Endothelial cell of umbilical vein (primary cell): ENCODE measurements at regions of chr12 and their contacts with region 1.

Region 1: DNA sequence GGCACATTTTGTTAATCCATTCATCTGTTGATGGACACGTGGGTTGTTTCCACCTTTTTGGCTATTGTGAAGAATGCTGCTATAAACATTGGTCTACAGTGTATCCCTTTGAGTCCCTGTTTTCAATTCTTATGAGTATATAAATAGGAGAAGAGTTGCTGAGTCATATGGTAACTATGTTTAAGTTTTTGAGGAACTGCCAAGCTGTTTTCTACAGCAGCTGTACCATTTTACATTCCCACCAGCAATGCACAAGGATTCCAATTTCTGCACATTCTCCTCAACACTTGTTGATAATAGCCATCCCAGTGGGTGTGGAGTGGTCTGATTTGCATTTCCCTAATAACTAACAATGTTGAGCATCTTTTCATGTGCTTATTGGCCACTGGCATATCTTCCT is 6.9 kb upstream of the SVOP start:
- DNase-seq: no peak
- H3K4me3 ChIP-seq: no peak overlapping the region
- H3K27ac ChIP-seq: no peak overlapping the region
- H3K4me1 ChIP-seq: no peaks in the 10 kb centered on the region
- H3K27me3 ChIP-seq: no peaks in the 10 kb centered on the region
- CTCF ChIP-seq: no peak
- POLR2A ChIP-seq: no peak

Region 2: GRCh38 chr12:108975024-108975593 is 52.7 kb before region 1 on chr12:
- CTCF ChIA-PET with region 1: no interaction called
- POLR2A ChIA-PET with region 1: no interaction called
- dilution Hi-C with region 1: no loop called
- intact Hi-C with region 1: loop called (anchors 2 kb)
- DNase-seq: no peak
- H3K4me3 ChIP-seq: no peak overlapping the region
- H3K27ac ChIP-seq: no peak overlapping the region
- H3K4me1 ChIP-seq: no peaks in the 10 kb centered on the region
- H3K27me3 ChIP-seq: no peaks in the 10 kb centered on the region
- CTCF ChIP-seq: no peak
- POLR2A ChIP-seq: no peak

Region 3: GRCh38 chr12:109182041-109182839 is 154.5 kb after region 1 on chr12:
- CTCF ChIA-PET with region 1: no interaction called
- POLR2A ChIA-PET with region 1: no interaction called
- dilution Hi-C with region 1: no loop called
- intact Hi-C with region 1: no loop called
- DNase-seq: no peak
- H3K4me3 ChIP-seq: no peak overlapping the region
- H3K27ac ChIP-seq: no peak overlapping the region
- H3K4me1 ChIP-seq: no peaks in the 10 kb centered on the region
- H3K27me3 ChIP-seq: no peaks in the 10 kb centered on the region
- CTCF ChIP-seq: no peak
- POLR2A ChIP-seq: no peak

Region 4: DNA sequence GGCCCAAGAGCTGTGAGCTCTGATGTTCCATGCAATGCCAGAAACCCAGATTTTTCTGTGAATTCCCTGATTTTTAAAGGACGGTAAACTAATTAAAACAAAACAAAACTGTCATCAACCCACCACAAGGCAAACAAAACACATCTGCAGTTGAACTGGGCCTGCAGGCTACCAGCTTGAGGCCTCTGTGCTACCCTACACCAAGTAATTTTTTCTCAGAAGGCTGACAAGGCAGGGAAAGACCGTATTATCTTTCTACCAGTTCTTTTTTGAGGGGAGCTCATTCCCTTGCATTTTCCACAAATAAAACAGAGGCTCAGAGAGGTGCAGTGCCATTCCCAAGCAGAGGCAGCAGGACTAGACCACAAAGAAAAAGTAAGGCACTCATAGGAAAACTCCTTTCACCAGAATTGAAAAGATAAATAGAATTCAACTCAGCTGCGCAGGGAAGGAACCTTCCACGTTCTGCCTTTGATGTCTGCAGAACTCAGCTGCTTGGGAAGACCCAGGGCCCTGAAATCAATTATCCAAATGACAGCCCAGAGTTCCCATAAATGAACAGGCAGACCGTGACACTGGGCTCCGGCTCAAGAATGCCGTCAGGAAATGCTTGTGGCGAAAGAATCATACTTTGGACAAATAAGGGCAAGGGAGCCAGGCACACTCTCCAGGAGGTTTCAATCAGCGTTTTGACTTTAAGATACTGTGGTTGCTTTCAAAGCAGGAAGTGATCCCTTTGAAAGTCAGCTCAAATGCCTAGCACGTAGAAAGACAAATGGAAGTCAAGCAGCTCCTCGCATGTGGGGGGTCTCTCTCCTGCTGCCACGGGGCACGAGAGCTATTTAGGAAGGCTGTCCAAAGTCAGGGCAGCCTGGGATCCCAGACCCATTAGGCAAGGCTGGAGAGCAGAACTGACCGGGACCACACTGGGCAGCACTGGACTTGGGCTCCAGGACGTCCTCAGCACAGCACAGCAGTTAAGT is 435.2 kb after region 1 on chr12:
- CTCF ChIA-PET with region 1: no interaction called
- POLR2A ChIA-PET with region 1: no interaction called
- dilution Hi-C with region 1: no loop called
- intact Hi-C with region 1: no loop called
- DNase-seq: peak; percentile 92
- H3K4me3 ChIP-seq: no peak overlapping the region
- H3K27ac ChIP-seq: peak overlapping the region; percentile 89
- H3K4me1 ChIP-seq: peaks cover 71% of the 10 kb centered on the region
- H3K27me3 ChIP-seq: no peaks in the 10 kb centered on the region
- CTCF ChIP-seq: no peak
- POLR2A ChIP-seq: peak; percentile 23